ENCODE measurements at regions of chr2 and their contacts with region 1.

Region 1: DNA sequence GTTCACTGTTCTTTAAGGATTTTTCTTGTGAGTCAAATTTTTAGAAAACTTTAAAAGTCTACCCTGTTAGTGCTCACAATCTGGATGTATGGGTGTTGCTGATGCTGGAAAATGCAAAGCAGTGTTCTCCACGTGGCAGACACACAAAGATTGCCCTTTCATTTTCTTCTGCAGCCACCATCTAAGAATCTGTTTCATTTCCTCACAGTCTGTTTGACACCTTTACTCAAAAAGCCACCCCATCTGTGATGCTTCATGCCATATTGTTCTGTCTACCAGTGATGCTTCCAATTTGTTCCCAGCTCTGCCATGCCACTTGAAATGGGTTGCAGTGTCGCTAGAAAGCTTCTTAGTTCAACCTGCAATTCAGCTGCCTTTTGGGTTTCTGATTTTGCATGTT is 464.2 kb upstream of the UBE2E3 start:
- DNase-seq: no peak
- H3K4me3 Mint-ChIP-seq: no peak overlapping the region
- H3K27ac Mint-ChIP-seq: no peak overlapping the region
- H3K4me1 Mint-ChIP-seq: no peaks in the 10 kb centered on the region
- H3K27me3 Mint-ChIP-seq: no peaks in the 10 kb centered on the region

Region 2: GRCh38 chr2:180268006-180268405 is 248.2 kb before region 1 on chr2:
- CTCF ChIA-PET with region 1: no interaction called
- POLR2A ChIA-PET with region 1: no interaction called
- DNase-seq: no peak
- H3K4me3 Mint-ChIP-seq: no peak overlapping the region
- H3K27ac Mint-ChIP-seq: no peak overlapping the region
- H3K4me1 Mint-ChIP-seq: no peaks in the 10 kb centered on the region
- H3K27me3 Mint-ChIP-seq: no peaks in the 10 kb centered on the region

Region 3: DNA sequence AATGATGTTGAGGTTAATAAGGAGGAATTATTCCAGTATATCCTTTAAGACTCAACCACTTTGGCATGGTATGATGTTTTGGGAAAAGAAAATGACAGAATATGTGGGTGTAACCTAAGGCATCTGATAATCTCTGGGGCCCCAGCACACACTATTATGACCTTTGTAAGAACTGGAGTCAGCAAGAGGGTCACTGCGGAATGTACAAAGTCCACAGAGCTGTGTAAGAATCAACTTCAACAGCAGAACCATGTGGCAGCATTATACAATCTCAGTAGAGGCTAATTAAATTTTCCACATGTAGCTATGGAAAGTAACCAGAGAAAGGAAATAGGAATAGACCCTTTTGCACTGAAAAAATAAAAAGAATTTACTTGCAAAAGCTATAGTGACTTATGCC is 19.1 kb after region 1 on chr2:
- CTCF ChIA-PET with region 1: no interaction called
- POLR2A ChIA-PET with region 1: interaction called, 11 read pairs
- DNase-seq: no peak
- H3K4me3 Mint-ChIP-seq: no peak overlapping the region
- H3K27ac Mint-ChIP-seq: no peak overlapping the region
- H3K4me1 Mint-ChIP-seq: no peaks in the 10 kb centered on the region
- H3K27me3 Mint-ChIP-seq: no peaks in the 10 kb centered on the region

Measured in activated CD4-positive, alpha-beta T cell treated with anti-CD3 and anti-CD28 coated beads, Interleukin-2, amount 10 ng/mL, durations not matched to agents 7 days and 5 days (primary cell).